MCF 10A (cell line): ENCODE measurements at regions of chr6 and their contacts with region 1.

Region 1: GRCh38 chr6:79869600-79870084 is 77.7 kb downstream of the ELOVL4 start:
- DNase-seq: peak; percentile 79
- H3K4me3 Mint-ChIP-seq: peak overlapping the region; percentile 21
- H3K27ac Mint-ChIP-seq: peak overlapping the region; percentile 51
- H3K4me1 Mint-ChIP-seq: peaks cover 24% of the 10 kb centered on the region
- H3K27me3 Mint-ChIP-seq: no peaks in the 10 kb centered on the region
- CTCF ChIP-seq: peak; percentile 82

Region 2: GRCh38 chr6:79094938-79095337 is 774.7 kb before region 1 on chr6:
- CTCF ChIA-PET with region 1: no interaction called
- POLR2A ChIA-PET with region 1: no interaction called
- intact Hi-C with region 1: no loop called
- DNase-seq: no peak
- H3K4me3 Mint-ChIP-seq: no peak overlapping the region
- H3K27ac Mint-ChIP-seq: no peak overlapping the region
- H3K4me1 Mint-ChIP-seq: no peaks in the 10 kb centered on the region
- H3K27me3 Mint-ChIP-seq: no peaks in the 10 kb centered on the region
- CTCF ChIP-seq: no peak

Region 3: DNA sequence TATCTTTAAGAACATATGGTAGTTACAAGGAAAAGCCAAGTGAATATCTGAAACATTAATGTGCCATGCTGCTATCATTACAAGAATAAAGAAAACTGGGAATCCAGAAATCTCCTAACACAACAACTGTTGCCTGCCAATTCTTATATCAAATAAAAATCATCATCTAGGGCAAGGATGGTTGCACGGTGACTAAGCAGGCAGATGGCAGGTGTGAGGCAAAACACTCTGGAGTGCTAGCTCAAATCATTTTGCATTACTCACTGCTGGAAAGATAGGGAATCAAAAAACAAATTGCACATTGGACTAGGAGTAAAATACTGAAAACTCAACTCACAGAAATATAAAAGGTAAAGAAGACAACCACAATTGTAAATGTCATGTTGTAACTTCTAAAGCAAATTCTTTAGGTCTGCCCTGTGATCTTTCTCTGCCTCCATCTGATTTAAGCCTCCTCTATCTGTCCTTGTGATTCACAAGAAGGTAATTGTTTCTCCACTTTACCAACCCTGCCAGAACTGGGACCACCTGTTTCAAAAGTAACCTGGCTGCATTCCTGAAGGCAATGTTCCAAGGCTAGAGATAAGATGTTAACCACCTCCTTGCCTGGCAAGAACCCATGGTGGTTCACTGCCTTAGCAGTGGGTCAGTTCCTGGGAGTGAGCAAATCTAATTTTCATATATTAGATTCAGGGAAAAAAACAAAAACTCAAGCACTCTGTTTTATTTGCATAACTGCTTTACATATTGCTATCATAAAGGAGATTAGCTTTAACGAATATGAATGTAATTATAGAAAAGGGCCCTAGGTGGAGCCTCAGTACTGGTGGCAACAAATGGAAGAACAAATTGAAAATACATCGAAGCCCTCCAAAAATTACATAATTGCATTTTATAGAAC is 299.3 kb before region 1 on chr6:
- CTCF ChIA-PET with region 1: interaction called, 12 read pairs
- POLR2A ChIA-PET with region 1: interaction called, 3 read pairs
- intact Hi-C with region 1: loop called (anchors 1 kb)
- DNase-seq: peak; percentile 54
- H3K4me3 Mint-ChIP-seq: no peak overlapping the region
- H3K27ac Mint-ChIP-seq: peak overlapping the region; percentile 63
- H3K4me1 Mint-ChIP-seq: peaks cover 18% of the 10 kb centered on the region
- H3K27me3 Mint-ChIP-seq: no peaks in the 10 kb centered on the region
- CTCF ChIP-seq: peak; percentile 68

Region 4: DNA sequence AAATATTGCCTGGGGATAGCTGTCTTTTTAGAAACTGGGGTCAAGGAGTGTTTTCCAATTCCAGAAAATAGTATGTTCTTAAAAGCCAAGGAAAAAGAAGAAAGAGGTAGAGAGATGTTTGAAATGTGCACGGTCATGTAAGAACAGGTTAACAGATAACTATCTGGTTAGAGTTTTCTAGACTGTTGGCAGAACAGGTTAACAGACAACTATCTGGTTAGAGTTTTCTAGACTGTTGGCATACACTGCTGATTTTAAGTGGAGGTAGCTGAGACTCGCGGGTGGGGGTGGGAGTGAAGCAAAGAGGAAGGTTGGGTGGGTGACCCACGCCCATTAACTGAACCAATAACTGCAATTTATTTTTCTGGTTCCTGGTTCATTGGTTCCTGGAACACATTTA is 79.8 kb before region 1 on chr6:
- CTCF ChIA-PET with region 1: interaction called, 11 read pairs
- POLR2A ChIA-PET with region 1: no interaction called
- intact Hi-C with region 1: no loop called
- DNase-seq: no peak
- H3K4me3 Mint-ChIP-seq: no peak overlapping the region
- H3K27ac Mint-ChIP-seq: no peak overlapping the region
- H3K4me1 Mint-ChIP-seq: no peaks in the 10 kb centered on the region
- H3K27me3 Mint-ChIP-seq: no peaks in the 10 kb centered on the region
- CTCF ChIP-seq: no peak

Region 5: GRCh38 chr6:79821859-79822258 is 47.8 kb before region 1 on chr6:
- CTCF ChIA-PET with region 1: interaction called, 9 read pairs
- POLR2A ChIA-PET with region 1: interaction called, 4 read pairs
- intact Hi-C with region 1: loop called (anchors 5 kb)
- DNase-seq: peak; percentile 38
- H3K4me3 Mint-ChIP-seq: no peak overlapping the region
- H3K27ac Mint-ChIP-seq: no peak overlapping the region
- H3K4me1 Mint-ChIP-seq: peaks cover 16% of the 10 kb centered on the region
- H3K27me3 Mint-ChIP-seq: no peaks in the 10 kb centered on the region
- CTCF ChIP-seq: no peak

Region 6: DNA sequence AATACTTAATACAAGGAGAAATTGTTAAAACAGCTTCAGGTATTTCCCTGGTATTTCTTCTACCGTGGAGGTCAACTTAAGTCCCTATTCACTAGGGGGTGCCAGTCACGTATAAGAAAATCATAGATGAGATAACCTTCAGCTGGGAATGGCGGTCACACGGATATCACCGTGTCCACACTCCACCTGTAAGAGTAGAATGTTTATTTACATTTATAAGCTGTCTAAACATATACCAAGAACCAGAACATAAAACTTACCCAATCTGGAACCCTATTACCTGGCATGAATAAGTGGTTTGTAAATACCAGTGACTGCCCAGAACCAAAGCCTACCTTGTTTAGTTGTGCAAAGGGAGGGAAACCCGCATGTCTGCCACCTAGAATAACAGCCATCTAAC is 79.6 kb after region 1 on chr6:
- CTCF ChIA-PET with region 1: interaction called, 11 read pairs
- POLR2A ChIA-PET with region 1: interaction called, 23 read pairs
- intact Hi-C with region 1: loop called (anchors 2 kb)
- DNase-seq: peak; percentile 79
- H3K4me3 Mint-ChIP-seq: no peak overlapping the region
- H3K27ac Mint-ChIP-seq: no peak overlapping the region
- H3K4me1 Mint-ChIP-seq: peaks cover 14% of the 10 kb centered on the region
- H3K27me3 Mint-ChIP-seq: no peaks in the 10 kb centered on the region
- CTCF ChIP-seq: peak; percentile 51

Region 7: GRCh38 chr6:80010289-80010688 is 140.6 kb after region 1 on chr6:
- CTCF ChIA-PET with region 1: interaction called, 10 read pairs
- POLR2A ChIA-PET with region 1: no interaction called
- intact Hi-C with region 1: loop called (anchors 2 kb)
- DNase-seq: no peak
- H3K4me3 Mint-ChIP-seq: no peak overlapping the region
- H3K27ac Mint-ChIP-seq: no peak overlapping the region
- H3K4me1 Mint-ChIP-seq: peaks cover 43% of the 10 kb centered on the region
- H3K27me3 Mint-ChIP-seq: no peaks in the 10 kb centered on the region
- CTCF ChIP-seq: no peak

Region 8: DNA sequence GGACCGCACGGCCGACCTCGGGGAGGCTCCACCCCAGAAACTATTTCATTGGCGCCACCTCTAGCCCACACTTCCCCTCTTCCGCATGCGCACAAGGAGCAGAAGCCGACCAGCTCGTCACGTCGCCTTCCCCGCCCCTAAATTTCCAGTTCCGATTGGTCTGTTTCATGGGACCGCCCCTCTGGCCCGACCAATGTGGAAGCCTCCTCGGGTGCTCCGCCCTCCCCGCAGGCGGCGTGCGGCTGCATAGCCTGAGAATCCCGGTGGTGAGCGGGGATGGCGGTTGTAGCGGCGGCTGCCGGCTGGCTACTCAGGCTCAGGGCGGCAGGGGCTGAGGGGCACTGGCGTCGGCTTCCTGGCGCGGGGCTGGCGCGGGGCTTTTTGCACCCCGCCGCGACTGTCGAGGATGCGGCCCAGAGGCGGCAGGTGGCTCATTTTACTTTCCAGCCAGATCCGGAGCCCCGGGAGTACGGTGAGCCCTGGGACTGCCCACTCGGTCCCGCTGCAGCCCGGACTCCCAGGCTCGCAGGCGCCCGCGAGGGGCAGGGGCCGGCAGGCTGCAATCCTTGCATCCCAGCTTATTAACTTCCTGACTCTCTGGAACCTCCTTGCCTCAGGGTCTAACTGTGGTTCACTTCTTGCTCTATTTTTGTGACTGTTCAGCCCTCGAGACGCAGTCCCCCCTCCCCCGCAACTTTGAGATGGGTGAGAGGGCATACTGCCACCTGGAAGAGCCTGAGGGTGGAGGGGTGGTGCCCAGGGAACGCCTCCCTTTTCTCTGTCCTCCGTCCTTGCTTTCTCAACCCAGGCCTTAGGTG is 237.0 kb after region 1 on chr6 and contains the start of gene BCKDHB:
- CTCF ChIA-PET with region 1: interaction called, 4 read pairs
- POLR2A ChIA-PET with region 1: interaction called, 11 read pairs
- intact Hi-C with region 1: no loop called
- DNase-seq: peak; percentile 100
- H3K4me3 Mint-ChIP-seq: peak within 1 kb of the TSS; percentile 96
- H3K27ac Mint-ChIP-seq: peak within 1 kb of the TSS; percentile 16
- H3K4me1 Mint-ChIP-seq: peaks cover 10% of the 10 kb centered on the region
- H3K27me3 Mint-ChIP-seq: peaks cover 11% of the 10 kb centered on the region
- CTCF ChIP-seq: no peak
- total RNA-seq, gene BCKDHB: 14.5 and 17.7 TPM in 2 replicates